ENCODE measurements at regions of chr1 and their contacts with region 1.

Region 1: DNA sequence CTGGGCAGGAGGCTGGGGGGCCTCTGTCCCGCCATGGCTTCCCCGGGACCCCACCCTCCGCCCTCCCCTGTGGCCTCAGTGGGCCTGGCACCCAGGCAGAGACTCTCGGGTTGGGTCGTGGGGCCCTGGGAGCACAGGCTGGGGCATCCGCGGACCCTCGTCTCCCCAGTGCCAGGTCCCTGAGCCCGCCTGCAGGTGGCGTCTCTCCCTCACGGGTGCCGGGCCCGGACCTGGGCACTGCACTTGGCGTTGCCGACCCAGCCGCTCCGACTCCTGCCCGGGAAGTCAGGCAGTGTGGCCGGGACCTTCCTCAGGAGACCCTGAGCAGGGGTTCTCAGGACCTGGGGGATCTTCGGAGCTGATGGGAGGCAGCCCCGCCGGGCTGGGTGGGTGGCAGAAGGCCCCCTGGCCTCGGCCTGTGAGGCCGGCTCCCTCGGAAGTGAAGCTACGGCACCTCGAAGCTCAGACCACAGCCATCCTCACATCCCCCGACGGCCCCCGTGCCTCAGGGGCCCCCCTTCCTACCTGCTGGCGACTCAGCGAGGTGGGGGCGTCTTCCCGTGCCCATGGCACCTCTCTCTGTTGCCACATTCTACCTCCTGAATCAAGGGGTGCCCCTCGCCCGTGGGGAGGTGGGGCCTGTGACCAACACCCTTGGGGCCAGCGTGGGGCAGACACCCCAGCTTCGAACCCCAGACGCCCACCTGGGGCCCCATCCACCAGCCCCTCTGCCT is 6.4 kb upstream of the C1orf159 start:
- DNase-seq: peak; percentile 97
- H3K4me3 ChIP-seq: peak overlapping the region in 1 of 2 experiments; percentile 6; a peak in 1 of 4 replicates
- H3K27ac ChIP-seq: no peak overlapping the region
- H3K4me1 ChIP-seq: peaks cover 0 to 13% of the 10 kb centered on the region in 2 experiments; a peak in 1 of 4 replicates
- H3K27me3 ChIP-seq: 0 out of 2 replicates have a peak, but pooled peaks cover 6% of the 10 kb centered on the region
- CTCF ChIP-seq: peak; percentile 65
- EP300 ChIP-seq: no peak
- RAD21 ChIP-seq: peak; percentile 91

Region 2: GRCh38 chr1:1041092-1041503 is 81.1 kb before region 1 on chr1:
- CTCF ChIA-PET with region 1: no interaction called
- POLR2A ChIA-PET with region 1: no interaction called
- DNase-seq: no peak
- H3K4me3 ChIP-seq: peak overlapping the region in 1 of 2 experiments; percentile 19; a peak in 1 of 4 replicates
- H3K27ac ChIP-seq: no peak overlapping the region
- H3K4me1 ChIP-seq: peaks cover 0 to 18% of the 10 kb centered on the region in 2 experiments; a peak in 1 of 4 replicates
- H3K27me3 ChIP-seq: no peaks in the 10 kb centered on the region
- CTCF ChIP-seq: no peak
- EP300 ChIP-seq: no peak
- RAD21 ChIP-seq: no peak

Region 3: GRCh38 chr1:1151306-1151705 is 29.1 kb after region 1 on chr1:
- CTCF ChIA-PET with region 1: interaction called, 11 read pairs
- POLR2A ChIA-PET with region 1: no interaction called
- DNase-seq: no peak
- H3K4me3 ChIP-seq: no peak overlapping the region
- H3K27ac ChIP-seq: no peak overlapping the region
- H3K4me1 ChIP-seq: no peaks in the 10 kb centered on the region
- H3K27me3 ChIP-seq: no peaks in the 10 kb centered on the region
- CTCF ChIP-seq: no peak
- EP300 ChIP-seq: no peak
- RAD21 ChIP-seq: no peak

Region 4: DNA sequence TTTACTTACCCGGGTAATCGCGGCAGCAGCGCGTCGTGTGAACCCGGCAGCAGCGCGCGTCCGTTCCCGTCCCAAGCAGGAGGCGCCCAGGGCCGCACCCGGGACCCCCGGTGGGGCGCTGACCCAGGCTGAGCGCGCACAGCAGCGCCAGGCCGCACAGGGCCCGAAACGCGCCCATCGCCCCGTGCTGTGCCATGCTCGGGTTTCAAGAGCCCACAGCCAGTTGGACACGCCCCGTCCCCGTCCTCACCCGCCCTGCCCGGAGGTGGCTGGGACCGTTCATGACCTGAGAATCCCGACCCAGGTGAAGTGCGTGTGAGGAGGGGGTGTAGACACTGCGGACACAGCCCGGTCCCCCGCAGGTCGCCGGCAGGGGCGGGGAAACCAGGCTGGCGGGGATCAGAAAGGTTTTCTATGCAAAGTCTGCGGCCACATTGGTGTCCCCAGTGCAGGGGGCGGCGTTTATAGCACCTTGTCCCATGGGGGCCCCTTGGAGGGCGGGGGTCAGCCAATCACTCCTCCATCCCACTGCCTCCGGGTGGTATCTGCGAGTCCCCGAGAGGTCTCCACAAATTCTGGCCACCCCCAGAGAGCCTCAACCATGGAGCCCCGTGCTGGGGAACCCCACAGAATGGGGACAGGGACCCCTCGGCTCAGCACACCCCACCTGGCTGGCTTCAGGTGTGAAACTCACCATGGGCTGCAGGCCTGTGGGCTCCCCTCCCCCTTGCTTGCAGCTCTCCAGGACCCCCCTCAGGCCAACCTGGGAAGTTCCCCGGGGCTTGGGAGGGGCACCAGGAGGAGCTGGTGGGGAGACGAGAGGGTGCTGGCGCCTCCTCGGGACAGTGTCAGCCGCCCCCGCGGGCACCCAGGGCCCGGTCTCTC is 84.4 kb after region 1 on chr1 and contains the start of gene TNFRSF18:
- CTCF ChIA-PET with region 1: interaction called, 16 read pairs
- POLR2A ChIA-PET with region 1: no interaction called
- DNase-seq: peak; percentile 62
- H3K4me3 ChIP-seq: no peak within 1 kb of the TSS
- H3K27ac ChIP-seq: no peak within 1 kb of the TSS
- H3K4me1 ChIP-seq: peaks cover 3 to 8% of the 10 kb centered on the region in 2 experiments; a peak in 1 of 4 replicates
- H3K27me3 ChIP-seq: peaks cover 7% of the 10 kb centered on the region; the same call in 1 of the 2 replicates
- CTCF ChIP-seq: no peak
- EP300 ChIP-seq: no peak
- RAD21 ChIP-seq: no peak
- polyA plus RNA-seq, gene TNFRSF18: 0.05 TPM in 1 of 2 replicates, not detected in the other

Region 5: DNA sequence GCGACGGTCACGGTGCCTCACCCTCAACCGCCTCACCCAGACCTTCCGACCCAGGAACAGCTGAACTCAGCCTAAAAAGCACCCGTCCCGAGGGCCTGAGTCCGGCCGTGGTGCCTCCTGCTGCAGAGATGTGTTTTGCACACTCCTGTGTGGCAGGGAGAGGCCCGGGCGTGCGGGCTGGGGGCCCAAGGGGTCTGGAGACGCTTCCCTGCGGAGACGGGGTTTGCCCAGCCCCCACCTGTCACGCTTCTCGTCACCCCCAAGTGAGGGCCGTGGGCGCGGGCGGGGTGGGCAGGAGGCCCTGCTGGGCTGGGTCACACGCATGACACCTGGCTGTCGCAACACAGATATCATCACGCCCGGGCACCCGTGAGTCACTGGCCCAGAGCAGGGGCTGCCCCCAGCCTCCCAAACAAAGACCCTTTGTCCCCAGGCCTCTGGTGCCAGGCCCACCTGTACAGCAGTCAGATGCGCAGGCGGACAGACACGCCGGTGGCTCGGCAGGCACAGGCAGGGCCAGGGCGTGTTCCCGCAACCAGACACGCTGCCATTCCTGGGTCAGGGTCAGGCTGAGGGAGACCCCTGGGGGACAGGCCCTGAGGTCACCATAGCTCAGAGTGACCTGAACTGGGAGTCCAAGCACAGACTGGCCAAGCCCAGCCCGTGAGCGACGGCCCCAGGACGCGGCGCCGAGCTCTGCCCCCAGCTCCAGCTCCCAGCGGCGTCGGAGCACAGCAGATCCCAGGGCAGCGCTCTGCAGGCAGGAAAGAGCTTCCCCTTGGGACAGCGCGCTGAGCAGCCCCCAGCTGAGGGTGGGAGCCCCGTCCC is 115.8 kb after region 1 on chr1:
- CTCF ChIA-PET with region 1: interaction called, 43 read pairs
- POLR2A ChIA-PET with region 1: no interaction called
- DNase-seq: no peak
- H3K4me3 ChIP-seq: no peak overlapping the region
- H3K27ac ChIP-seq: no peak overlapping the region
- H3K4me1 ChIP-seq: peaks cover 0 to 22% of the 10 kb centered on the region in 2 experiments; a peak in 1 of 4 replicates
- H3K27me3 ChIP-seq: no peaks in the 10 kb centered on the region
- CTCF ChIP-seq: no peak
- EP300 ChIP-seq: no peak
- RAD21 ChIP-seq: no peak

Region 6: DNA sequence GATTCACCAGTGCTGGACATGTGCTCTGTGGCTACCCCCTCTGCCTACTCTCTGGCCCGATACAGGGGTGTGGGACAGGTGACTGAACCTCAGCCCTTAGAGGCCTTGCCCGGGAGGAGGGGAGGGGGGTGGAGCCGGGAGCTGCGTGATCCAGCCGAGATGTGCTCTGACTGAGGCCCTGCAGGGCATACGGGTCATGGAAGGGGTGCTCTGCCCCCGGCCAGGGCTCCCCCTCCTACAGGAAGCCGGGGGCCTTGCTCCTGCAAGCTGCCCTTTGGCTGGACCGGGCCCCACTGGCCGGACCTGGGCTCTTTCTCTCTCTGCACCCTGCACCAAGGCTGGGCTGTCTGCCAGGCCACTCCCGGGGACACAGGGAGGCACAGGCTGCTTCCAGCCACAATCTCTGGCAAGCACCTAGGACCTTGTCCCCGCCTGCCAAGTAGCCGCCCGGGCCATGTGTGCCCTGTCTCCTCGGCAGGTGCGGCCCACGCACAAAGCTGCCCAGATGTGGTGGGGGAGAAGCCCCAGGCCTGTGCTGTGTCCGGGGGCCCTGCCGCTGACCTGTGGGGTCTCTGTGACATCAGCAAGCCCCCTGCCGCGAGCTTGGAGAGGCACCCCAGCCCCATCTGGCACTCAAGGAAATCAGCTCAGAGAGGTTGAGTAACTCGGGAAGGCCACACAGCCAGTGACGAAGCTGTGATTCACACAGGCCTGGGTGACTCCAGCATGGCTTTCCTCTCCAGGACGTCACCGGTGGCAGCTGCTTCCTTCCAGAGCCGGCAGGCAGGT is 159.5 kb after region 1 on chr1:
- CTCF ChIA-PET with region 1: interaction called, 10 read pairs
- POLR2A ChIA-PET with region 1: no interaction called
- DNase-seq: peak; percentile 55
- H3K4me3 ChIP-seq: no peak overlapping the region
- H3K27ac ChIP-seq: no peak overlapping the region
- H3K4me1 ChIP-seq: peaks cover 0 to 9% of the 10 kb centered on the region in 2 experiments; a peak in 1 of 4 replicates
- H3K27me3 ChIP-seq: no peaks in the 10 kb centered on the region
- CTCF ChIP-seq: no peak
- EP300 ChIP-seq: no peak
- RAD21 ChIP-seq: no peak

Region 7: DNA sequence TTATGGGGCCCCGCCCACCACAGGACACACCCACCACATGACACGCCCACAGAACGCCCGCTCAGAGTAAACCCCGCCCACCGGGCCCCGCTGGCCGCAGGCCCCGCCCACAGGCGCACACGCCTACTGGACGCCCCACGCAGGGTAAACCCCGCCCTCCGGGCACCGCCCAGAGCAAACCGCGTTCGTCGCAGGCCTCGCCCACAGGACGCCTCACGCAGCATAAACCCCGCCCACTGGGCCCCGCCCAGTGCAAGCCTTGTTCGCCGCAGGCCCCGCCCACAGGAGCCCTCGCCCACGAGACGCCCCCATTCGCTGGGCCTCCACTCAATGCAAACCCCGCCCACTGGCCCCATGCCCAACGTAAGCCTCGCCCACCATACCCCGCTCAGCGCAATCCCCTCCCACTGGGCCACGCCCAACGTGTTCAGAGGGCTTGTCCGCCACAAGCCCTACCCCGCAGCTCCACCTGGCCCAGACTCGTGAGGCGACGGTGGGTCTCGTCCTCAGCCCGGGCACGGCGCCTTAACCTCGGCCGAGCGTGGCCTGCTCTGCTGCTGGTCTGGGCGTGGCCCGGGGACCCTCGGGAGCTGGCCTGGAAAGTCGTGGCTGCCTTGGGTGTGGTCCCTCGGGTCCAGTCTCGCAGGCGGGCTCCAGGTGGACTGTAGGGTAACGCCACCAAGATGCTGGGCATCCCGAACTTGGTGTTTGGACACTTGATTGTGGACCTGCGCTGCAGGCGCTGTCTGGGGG is 797.2 kb after region 1 on chr1:
- CTCF ChIA-PET with region 1: no interaction called
- POLR2A ChIA-PET with region 1: no interaction called
- DNase-seq: peak; percentile 100
- H3K4me3 ChIP-seq: peak overlapping the region; percentile 58 to 64
- H3K27ac ChIP-seq: no peak overlapping the region; a peak in 1 of 4 replicates
- H3K4me1 ChIP-seq: peaks cover 0 to 17% of the 10 kb centered on the region in 2 experiments; a peak in 1 of 4 replicates
- H3K27me3 ChIP-seq: no peaks in the 10 kb centered on the region
- CTCF ChIP-seq: no peak
- EP300 ChIP-seq: no peak
- RAD21 ChIP-seq: no peak